ENCODE measurements at regions of chr6 and their contacts with region 1.

Region 1: GRCh38 chr6:61809004-61809595 is 476.9 kb downstream of the KHDRBS2 start:
- H3K4me3 Mint-ChIP-seq: no peak overlapping the region
- H3K27ac Mint-ChIP-seq: no peak overlapping the region
- H3K4me1 Mint-ChIP-seq: no peaks in the 10 kb centered on the region
- H3K27me3 Mint-ChIP-seq: no peaks in the 10 kb centered on the region

Region 2: GRCh38 chr6:61675734-61676133 is 133.4 kb before region 1 on chr6:
- intact Hi-C with region 1: no loop called
- H3K4me3 Mint-ChIP-seq: no peak overlapping the region
- H3K27ac Mint-ChIP-seq: no peak overlapping the region
- H3K4me1 Mint-ChIP-seq: no peaks in the 10 kb centered on the region
- H3K27me3 Mint-ChIP-seq: no peaks in the 10 kb centered on the region

Region 3: DNA sequence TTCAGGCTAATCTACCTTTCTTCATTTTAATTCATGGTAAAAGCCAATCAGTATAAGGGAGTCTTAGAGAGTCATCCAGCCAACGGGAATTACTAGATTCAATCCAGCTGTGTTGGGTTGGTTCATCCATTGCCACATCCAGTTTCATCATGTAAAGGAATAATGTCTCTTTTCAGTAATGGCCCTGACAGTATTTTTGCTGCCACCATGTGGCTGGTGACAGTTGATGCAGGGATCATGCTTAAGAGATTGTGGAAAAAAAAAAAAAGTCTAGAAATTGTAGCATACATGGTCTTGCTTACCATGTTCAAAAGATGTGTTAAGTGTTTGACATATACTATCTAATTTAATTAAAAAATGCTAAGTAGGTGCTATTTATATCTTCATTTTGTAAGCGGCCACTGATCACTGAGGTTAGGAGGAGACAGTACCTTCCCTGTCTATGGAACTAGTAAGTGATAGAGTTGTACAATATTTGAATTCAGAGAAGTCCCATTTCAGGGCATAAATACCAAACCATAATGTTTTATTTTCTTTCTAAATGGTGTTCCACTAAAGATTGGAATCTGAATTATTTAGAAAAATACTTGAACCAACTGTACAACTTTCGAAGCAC is 341.1 kb after region 1 on chr6:
- intact Hi-C with region 1: loop called (anchors 10 kb)
- H3K4me3 Mint-ChIP-seq: no peak overlapping the region
- H3K27ac Mint-ChIP-seq: no peak overlapping the region
- H3K4me1 Mint-ChIP-seq: no peaks in the 10 kb centered on the region
- H3K27me3 Mint-ChIP-seq: no peaks in the 10 kb centered on the region

Region 4: DNA sequence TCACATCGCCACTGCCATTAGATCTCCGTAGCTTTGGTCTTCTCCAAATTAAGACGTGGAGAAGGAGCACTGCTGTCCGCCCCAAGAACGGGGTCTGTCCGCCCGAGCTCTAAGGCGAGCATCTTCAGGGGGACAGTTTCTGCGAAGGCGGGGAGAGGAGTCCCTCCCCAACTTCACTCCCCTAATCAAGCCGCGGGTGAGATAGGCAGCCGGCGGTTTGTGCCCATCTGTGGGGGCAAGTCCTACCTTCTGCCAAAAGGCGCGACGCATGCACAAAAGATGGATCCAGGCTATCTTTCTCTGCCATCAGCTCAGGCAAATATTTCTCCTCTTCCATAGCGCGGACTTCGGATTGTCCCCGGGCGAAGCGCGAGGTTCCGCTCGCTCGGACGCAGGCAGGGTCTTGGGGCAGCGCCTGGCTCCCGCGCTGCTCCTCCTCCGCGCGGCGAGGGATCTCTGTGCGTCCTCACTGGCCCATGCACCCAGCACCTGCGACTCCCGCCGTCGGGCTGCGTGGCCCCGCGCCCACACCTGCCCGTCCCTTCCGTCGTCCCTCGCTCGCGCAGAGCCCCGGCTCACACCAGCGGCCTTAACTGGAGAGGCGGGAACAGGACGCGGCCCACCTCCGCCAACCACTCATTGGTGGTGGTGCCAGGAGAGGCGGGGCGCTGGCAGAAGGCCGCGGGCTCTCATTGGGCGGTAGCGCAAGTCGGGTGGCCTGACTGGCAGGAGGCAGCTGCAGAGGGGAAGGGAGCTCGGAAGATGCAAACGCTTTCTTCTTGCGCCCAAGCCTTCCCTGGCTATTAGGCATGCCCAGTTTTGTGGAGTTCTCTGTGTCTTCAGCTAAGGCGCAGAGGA is 476.7 kb after region 1 on chr6 and contains the start of gene KHDRBS2:
- intact Hi-C with region 1: loop called (anchors 5 kb)
- H3K4me3 Mint-ChIP-seq: peak within 1 kb of the TSS; percentile 81
- H3K27ac Mint-ChIP-seq: peak within 1 kb of the TSS; percentile 3
- H3K4me1 Mint-ChIP-seq: peaks cover 19% of the 10 kb centered on the region
- H3K27me3 Mint-ChIP-seq: peaks cover 27% of the 10 kb centered on the region

Region 5: DNA sequence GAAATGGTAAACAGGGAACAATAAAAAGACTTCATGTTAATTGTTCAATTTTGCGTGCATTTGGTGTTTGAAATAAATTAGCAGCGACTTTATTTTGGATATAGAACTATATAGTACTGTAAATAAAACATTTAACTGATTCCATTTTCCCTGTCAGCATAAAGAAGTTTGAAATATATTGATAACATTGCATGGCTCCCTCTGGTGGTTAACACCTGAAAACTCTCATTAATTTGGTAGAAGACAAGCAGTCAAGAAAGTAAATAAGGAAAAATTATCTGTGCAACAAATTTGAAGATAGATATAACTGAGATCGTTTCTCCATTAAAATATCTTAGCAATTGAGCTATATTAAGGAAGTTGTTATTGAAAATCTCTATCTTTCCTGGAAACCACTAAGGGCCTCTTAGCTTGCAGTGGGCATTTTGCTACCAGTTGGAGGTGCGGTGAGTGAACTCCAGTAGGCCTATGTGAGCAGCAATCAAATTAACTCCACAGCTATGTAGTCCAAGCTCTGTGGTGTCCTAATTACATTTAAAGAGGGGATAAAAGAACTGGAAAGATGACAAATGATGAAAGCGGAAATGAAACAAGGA is 966.4 kb after region 1 on chr6:
- intact Hi-C with region 1: loop called (anchors 5 kb)
- H3K4me3 Mint-ChIP-seq: no peak overlapping the region
- H3K27ac Mint-ChIP-seq: no peak overlapping the region
- H3K4me1 Mint-ChIP-seq: no peaks in the 10 kb centered on the region
- H3K27me3 Mint-ChIP-seq: no peaks in the 10 kb centered on the region